ENCODE measurements at regions of chr12 and their contacts with region 1.

Region 1: GRCh38 chr12:120437754-120438494 is at the start of gene COX6A1:
- DNase-seq: peak; percentile 99
- H3K4me3 Mint-ChIP-seq: peak within 1 kb of the TSS; percentile 99
- H3K27ac Mint-ChIP-seq: peak within 1 kb of the TSS; percentile 92
- H3K4me1 Mint-ChIP-seq: peaks cover 22% of the 10 kb centered on the region
- H3K27me3 Mint-ChIP-seq: peaks cover 2% of the 10 kb centered on the region
- total RNA-seq, gene COX6A1: 474 to 478 TPM

Region 2: DNA sequence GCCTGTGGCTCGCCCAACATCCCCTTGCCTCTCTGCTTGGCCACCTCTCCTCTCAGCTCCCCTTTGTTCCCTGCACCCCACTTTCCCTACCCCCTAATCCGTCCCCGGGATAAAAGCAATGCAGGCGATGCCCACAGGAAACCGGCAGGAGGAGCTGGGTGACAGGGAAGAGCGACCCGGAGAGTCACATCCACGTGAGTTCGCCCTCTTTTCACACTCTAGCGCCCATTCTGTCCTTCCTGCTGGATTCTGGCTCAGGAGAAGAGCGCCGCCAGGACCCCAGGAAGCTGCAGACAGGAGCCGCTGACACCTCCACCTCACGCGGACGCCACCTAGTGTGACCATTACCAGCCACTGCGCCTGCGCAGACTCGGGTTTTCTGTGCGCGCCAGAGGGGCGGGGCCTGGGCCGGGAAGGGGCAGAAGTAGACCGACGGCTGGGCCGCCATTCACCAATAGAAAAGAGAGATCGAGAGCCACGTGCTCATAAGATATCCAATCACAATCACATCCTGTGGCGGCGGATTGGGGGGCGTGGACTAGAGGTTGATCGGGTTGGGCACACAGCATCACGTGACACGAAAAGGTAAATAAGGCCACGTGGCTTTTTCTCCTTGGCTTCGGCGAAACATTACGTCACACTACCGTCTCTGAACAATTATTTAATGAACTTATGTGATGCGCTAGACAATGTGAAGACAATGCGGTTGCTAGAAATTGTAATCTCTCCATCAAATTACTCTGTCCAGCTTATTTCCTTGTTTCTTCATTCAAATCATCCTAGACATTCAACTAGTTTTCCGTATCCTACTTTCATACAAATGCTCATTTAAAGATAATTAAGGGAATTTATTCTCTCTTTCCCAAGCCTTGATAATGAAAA is 120.5 kb before region 1 on chr12:
- CTCF ChIA-PET with region 1: no interaction called
- POLR2A ChIA-PET with region 1: no interaction called
- intact Hi-C with region 1: loop called (anchors 1 kb)
- DNase-seq: peak; percentile 100
- H3K4me3 Mint-ChIP-seq: peak overlapping the region; percentile 90
- H3K27ac Mint-ChIP-seq: peak overlapping the region; percentile 88
- H3K4me1 Mint-ChIP-seq: peaks cover 13% of the 10 kb centered on the region
- H3K27me3 Mint-ChIP-seq: no peaks in the 10 kb centered on the region

Region 3: GRCh38 chr12:120327593-120327992 is 110.3 kb before region 1 on chr12 and contains the start of gene PLA2G1B:
- CTCF ChIA-PET with region 1: interaction called, 5 read pairs
- POLR2A ChIA-PET with region 1: no interaction called
- intact Hi-C with region 1: loop called (anchors 2 kb)
- DNase-seq: no peak
- H3K4me3 Mint-ChIP-seq: no peak within 1 kb of the TSS
- H3K27ac Mint-ChIP-seq: no peak within 1 kb of the TSS
- H3K4me1 Mint-ChIP-seq: peaks cover 2% of the 10 kb centered on the region
- H3K27me3 Mint-ChIP-seq: peaks cover 2% of the 10 kb centered on the region
- total RNA-seq, gene PLA2G1B: not detected

Region 4: DNA sequence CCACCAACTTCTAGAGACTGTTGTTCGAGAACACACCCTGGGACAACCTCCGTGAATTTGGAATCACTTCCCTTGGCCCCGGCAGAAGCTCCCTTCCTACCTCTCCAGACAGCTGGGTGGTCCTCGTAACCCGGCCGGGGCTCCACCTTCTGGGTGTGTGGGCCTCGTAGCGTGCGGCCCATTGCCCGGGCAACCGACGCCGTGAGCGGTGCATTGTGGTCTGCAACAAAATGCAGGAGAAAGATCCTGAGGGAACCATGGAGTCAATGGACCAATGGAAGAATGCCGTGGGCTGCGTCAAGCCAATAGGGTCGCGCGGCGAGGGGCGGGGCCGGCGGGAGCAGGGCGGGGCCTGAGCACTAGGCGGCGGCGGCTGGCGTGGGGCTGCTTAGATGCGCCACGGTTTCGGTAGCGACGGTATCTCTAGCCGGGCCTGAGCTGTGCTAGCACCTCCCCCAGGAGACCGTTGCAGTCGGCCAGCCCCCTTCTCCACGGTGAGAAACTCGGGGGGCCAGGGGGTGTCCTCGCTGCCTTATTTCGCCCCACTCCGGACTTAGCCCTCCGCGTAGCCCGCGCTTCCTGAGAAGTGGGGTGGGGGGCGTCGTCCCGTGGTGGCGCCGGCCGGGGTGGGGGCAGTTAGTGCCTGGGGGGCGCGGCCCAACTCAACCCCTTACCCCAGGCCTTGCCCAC is 57.9 kb after region 1 on chr12 and contains the start of gene DYNLL1:
- CTCF ChIA-PET with region 1: interaction called, 4 read pairs
- POLR2A ChIA-PET with region 1: no interaction called
- intact Hi-C with region 1: loop called (anchors 2 kb)
- DNase-seq: peak; percentile 98
- H3K4me3 Mint-ChIP-seq: peak within 1 kb of the TSS; percentile 86
- H3K27ac Mint-ChIP-seq: peak within 1 kb of the TSS; percentile 80
- H3K4me1 Mint-ChIP-seq: peaks cover 23% of the 10 kb centered on the region
- H3K27me3 Mint-ChIP-seq: no peaks in the 10 kb centered on the region
- total RNA-seq, gene DYNLL1: 176 to 184 TPM

Region 5: GRCh38 chr12:120534203-120534702 is 96.3 kb after region 1 on chr12 and contains the start of gene RNF10:
- CTCF ChIA-PET with region 1: no interaction called
- POLR2A ChIA-PET with region 1: interaction called, 4 read pairs
- intact Hi-C with region 1: loop called (anchors 1 kb)
- DNase-seq: peak; percentile 80
- H3K4me3 Mint-ChIP-seq: peak within 1 kb of the TSS; percentile 97
- H3K27ac Mint-ChIP-seq: peak within 1 kb of the TSS; percentile 96
- H3K4me1 Mint-ChIP-seq: peaks cover 43% of the 10 kb centered on the region
- H3K27me3 Mint-ChIP-seq: no peaks in the 10 kb centered on the region
- total RNA-seq, gene RNF10: 188 to 210 TPM

Region 6: DNA sequence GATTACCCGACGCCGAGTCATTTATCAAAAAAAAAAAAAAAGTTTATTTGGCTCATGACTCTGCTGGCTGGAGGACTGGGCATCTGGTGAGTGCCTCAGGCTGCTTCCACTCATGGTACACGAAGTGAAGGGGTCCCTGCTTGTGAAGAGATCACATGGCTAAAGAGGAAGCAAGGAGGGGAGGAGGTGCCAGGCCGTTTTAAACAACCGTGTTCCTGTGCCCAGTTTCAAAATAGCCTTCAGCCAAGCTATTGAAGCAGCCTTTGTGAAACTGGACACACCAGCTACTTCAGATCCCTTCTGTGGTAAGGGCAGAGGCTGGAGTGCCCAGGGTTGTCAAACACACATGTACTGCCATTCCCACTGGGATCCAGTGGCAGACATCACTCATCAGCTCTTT is 135.6 kb after region 1 on chr12:
- CTCF ChIA-PET with region 1: no interaction called
- POLR2A ChIA-PET with region 1: no interaction called
- intact Hi-C with region 1: no loop called
- DNase-seq: no peak
- H3K4me3 Mint-ChIP-seq: no peak overlapping the region
- H3K27ac Mint-ChIP-seq: no peak overlapping the region
- H3K4me1 Mint-ChIP-seq: no peaks in the 10 kb centered on the region
- H3K27me3 Mint-ChIP-seq: no peaks in the 10 kb centered on the region

Region 7: GRCh38 chr12:120610560-120610959 is 172.6 kb after region 1 on chr12:
- CTCF ChIA-PET with region 1: no interaction called
- POLR2A ChIA-PET with region 1: no interaction called
- intact Hi-C with region 1: no loop called
- DNase-seq: no peak
- H3K4me3 Mint-ChIP-seq: no peak overlapping the region
- H3K27ac Mint-ChIP-seq: no peak overlapping the region
- H3K4me1 Mint-ChIP-seq: peaks cover 13% of the 10 kb centered on the region
- H3K27me3 Mint-ChIP-seq: no peaks in the 10 kb centered on the region